ENCODE measurements at regions of chr2 and their contacts with region 1.

Region 1: DNA sequence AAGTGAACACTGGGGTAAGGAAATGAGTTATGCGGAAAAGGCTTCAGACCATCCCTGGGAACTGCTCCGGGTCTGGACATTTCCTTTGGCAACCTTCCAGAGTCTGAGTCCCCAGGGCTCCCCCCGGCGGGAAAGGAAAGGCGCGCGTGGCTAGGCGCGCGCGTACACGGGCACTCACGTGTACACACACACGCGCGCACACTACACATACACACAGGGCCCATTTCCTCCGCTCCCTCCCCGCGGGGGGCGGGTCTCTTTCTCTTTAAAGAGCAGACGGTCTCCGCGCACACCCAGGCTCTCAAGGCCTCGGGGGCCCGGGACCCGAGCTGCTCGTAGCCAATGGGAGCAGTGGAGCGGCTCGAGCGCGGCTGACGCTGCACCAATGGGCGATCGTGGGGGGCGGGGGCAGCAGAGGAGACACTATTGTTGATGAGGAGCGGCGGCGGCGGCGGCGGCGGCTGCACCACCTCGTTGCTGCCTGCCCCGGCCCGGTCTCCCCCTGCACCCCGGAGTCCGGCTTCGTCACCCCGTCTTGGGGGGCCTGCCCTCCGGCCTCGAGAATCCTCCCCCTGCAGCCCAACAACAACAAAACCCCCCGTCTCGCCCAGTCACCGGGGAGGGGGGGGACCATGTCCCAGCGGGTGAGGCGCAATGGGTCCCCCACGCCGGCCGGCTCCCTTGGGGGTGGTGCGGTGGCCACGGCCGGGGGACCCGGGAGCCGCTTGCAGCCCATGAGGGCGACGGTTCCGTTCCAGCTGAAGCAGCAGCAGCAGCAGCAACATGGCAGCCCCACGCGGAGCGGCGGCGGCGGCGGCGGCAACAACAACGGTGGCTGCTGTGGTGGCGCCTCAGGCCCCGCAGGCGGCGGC is at the start of gene FAM117B:
- DNase-seq: peak; percentile 99
- H3K4me3 Mint-ChIP-seq: peak within 1 kb of the TSS; percentile 98
- H3K27ac Mint-ChIP-seq: peak within 1 kb of the TSS; percentile 97
- H3K4me1 Mint-ChIP-seq: peaks cover 35% of the 10 kb centered on the region
- H3K27me3 Mint-ChIP-seq: no peaks in the 10 kb centered on the region
- total RNA-seq, gene FAM117B: 14.5 TPM in 2 replicates

Region 2: GRCh38 chr2:202278944-202279343 is 355.8 kb before region 1 on chr2:
- intact Hi-C with region 1: loop called (anchors 5 kb)
- DNase-seq: no peak
- H3K4me3 Mint-ChIP-seq: peak overlapping the region; percentile 21
- H3K27ac Mint-ChIP-seq: peak overlapping the region; percentile 62
- H3K4me1 Mint-ChIP-seq: peaks cover 35% of the 10 kb centered on the region
- H3K27me3 Mint-ChIP-seq: no peaks in the 10 kb centered on the region

Region 3: DNA sequence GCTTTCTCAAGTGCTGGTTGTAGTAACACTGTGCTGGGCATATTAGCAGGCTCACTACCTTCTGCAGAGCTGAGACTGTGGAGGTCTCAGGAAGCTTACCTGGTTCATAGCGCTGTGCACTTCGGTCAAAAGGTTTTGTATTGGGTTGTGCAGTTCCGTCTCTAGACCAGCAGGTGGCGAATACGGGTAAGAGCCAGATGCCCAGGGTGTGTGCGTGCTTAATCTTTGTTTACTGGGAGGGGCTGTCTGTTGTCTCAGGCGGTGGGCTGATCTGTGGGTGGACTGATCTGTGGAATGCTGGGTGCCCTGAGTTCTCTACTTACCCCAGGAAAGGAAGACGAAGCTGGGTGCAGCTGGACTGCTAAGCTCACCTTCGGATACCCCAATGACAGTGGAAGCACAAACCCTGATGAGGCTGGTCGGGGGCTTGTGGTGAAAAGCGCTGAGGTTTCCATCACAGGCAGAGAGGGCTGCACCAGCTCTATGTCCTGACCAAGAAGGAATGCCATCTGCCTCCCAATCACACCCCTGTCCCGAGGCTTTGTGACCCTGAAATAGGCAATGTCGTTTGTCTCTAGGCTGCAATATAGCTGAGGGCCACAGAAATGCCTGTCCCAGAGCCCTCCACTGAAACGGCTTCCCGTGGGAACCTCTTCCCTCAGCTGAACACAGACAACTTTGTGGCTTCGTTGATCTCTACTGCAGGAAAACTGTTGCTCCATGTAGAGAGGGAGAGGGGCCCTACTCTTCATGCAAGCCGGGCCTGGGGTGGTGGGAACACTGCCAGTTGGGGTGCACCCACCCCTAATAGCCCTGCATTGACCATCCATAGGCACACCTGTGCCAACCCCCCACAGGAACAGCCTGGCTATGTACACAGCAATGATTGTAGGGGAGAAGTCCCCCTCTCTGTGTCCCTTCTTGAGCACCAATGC is 45.9 kb before region 1 on chr2:
- intact Hi-C with region 1: loop called (anchors 1 kb)
- DNase-seq: peak; percentile 89
- H3K4me3 Mint-ChIP-seq: no peak overlapping the region
- H3K27ac Mint-ChIP-seq: peak overlapping the region; percentile 38
- H3K4me1 Mint-ChIP-seq: peaks cover 10% of the 10 kb centered on the region
- H3K27me3 Mint-ChIP-seq: peaks cover 3% of the 10 kb centered on the region

Region 4: GRCh38 chr2:202652119-202652518 is 17.3 kb after region 1 on chr2:
- intact Hi-C with region 1: no loop called
- DNase-seq: no peak
- H3K4me3 Mint-ChIP-seq: no peak overlapping the region
- H3K27ac Mint-ChIP-seq: no peak overlapping the region
- H3K4me1 Mint-ChIP-seq: peaks cover 37% of the 10 kb centered on the region
- H3K27me3 Mint-ChIP-seq: no peaks in the 10 kb centered on the region

Region 5: GRCh38 chr2:202771741-202772460 is 137.1 kb after region 1 on chr2:
- intact Hi-C with region 1: no loop called
- DNase-seq: no peak
- H3K4me3 Mint-ChIP-seq: no peak overlapping the region
- H3K27ac Mint-ChIP-seq: no peak overlapping the region
- H3K4me1 Mint-ChIP-seq: no peaks in the 10 kb centered on the region
- H3K27me3 Mint-ChIP-seq: no peaks in the 10 kb centered on the region

Region 6: GRCh38 chr2:203014456-203015199 is 379.8 kb after region 1 on chr2 and contains the start of gene NBEAL1:
- intact Hi-C with region 1: loop called (anchors 1 kb)
- DNase-seq: peak; percentile 99
- H3K4me3 Mint-ChIP-seq: peak within 1 kb of the TSS; percentile 98
- H3K27ac Mint-ChIP-seq: peak within 1 kb of the TSS; percentile 77
- H3K4me1 Mint-ChIP-seq: peaks cover 31% of the 10 kb centered on the region
- H3K27me3 Mint-ChIP-seq: peaks cover 15% of the 10 kb centered on the region
- total RNA-seq, gene NBEAL1: 7.2 and 9.5 TPM in 2 replicates

Region 7: GRCh38 chr2:203740780-203741281 is 1106.0 kb after region 1 on chr2:
- intact Hi-C with region 1: loop called (anchors 10 kb)
- DNase-seq: peak; percentile 89
- H3K4me3 Mint-ChIP-seq: peak overlapping the region; percentile 69
- H3K27ac Mint-ChIP-seq: peak overlapping the region; percentile 96
- H3K4me1 Mint-ChIP-seq: peaks cover 72% of the 10 kb centered on the region
- H3K27me3 Mint-ChIP-seq: no peaks in the 10 kb centered on the region

Measured in activated CD4-positive, alpha-beta T cell treated with anti-CD3 and anti-CD28 coated beads, Interleukin-2, amount 10 ng/mL, durations not matched to agents 24 days and 14 days (primary cell).